ENCODE measurements at regions of chr20 and their contacts with region 1.

Region 1: DNA sequence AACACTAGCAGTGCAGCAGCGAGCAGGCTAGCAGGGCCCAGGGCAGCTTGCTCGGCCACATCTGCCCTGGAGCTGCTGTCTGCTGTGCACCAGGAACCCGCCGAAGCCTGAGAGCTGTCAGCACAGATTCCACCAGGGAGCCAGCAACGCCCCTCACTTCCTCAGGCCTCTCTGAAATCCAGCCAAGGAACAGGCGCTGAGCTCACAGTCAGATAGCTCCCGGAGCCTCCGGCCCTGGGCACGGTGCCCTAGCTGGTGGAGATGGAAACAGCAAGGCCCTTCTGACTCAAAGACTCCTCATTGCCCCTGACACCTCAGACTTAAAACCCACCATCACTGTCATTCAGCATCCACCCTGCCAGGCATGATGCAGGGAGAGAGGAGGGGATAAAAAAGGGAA is 839.4 kb downstream of the MAFB start:
- DNase-seq: no peak
- H3K4me3 ChIP-seq: no peak overlapping the region
- H3K27ac ChIP-seq: no peak overlapping the region
- H3K4me1 ChIP-seq: peaks cover 2 to 12% (median 7%) of the 10 kb centered on the region in 4 experiments; a peak in 4 of 7 replicates
- H3K27me3 ChIP-seq: peaks cover 0 to 2% (median 0%) of the 10 kb centered on the region in 4 experiments; a peak in 2 of 7 replicates
- CTCF ChIP-seq: no peak
- EP300 ChIP-seq: no peak
- POLR2A ChIP-seq: no peak
- RAD21 ChIP-seq: no peak

Region 2: GRCh38 chr20:39829256-39829655 is 20.4 kb before region 1 on chr20:
- CTCF ChIA-PET with region 1: interaction called, 24 read pairs
- POLR2A ChIA-PET with region 1: no interaction called
- DNase-seq: peak; percentile 7 to 53
- H3K4me3 ChIP-seq: no peak overlapping the region
- H3K27ac ChIP-seq: no peak overlapping the region
- H3K4me1 ChIP-seq: peaks cover 0 to 6% (median 3%) of the 10 kb centered on the region in 4 experiments; a peak in 4 of 7 replicates
- H3K27me3 ChIP-seq: no peaks in the 10 kb centered on the region
- CTCF ChIP-seq: peak; percentile 59 to 75 (median 69)
- EP300 ChIP-seq: no peak
- POLR2A ChIP-seq: no peak
- RAD21 ChIP-seq: peak; percentile 84

Region 3: GRCh38 chr20:39885975-39886649 is 36.4 kb after region 1 on chr20:
- CTCF ChIA-PET with region 1: no interaction called
- POLR2A ChIA-PET with region 1: no interaction called
- DNase-seq: peak; percentile 66 to 80
- H3K4me3 ChIP-seq: no peak overlapping the region
- H3K27ac ChIP-seq: no peak overlapping the region
- H3K4me1 ChIP-seq: 0 out of 7 replicates have a peak, but pooled peaks cover 0 to 3% (median 0%) of the 10 kb centered on the region in 4 experiments
- H3K27me3 ChIP-seq: no peaks in the 10 kb centered on the region
- CTCF ChIP-seq: peak; percentile 60 to 66 (median 63)
- EP300 ChIP-seq: no peak
- POLR2A ChIP-seq: no peak
- RAD21 ChIP-seq: peak; percentile 82 to 84

Measured in H1 (cell line).